GM12878 (cell line): ENCODE measurements at regions of chr5 and their contacts with region 1.

Region 1: GRCh38 chr5:14650052-14650451 is 14.5 kb upstream of the OTULIN start:
- DNase-seq: no peak
- ATAC-seq: no peak
- H3K4me3 ChIP-seq: no peak overlapping the region
- H3K27ac ChIP-seq: no peak overlapping the region
- H3K4me1 ChIP-seq: no peaks in the 10 kb centered on the region
- H3K27me3 ChIP-seq: no peaks in the 10 kb centered on the region
- CTCF ChIP-seq: no peak
- EP300 ChIP-seq: no peak
- POLR2A ChIP-seq: no peak
- RAD21 ChIP-seq: no peak

Region 2: GRCh38 chr5:13976867-13977830 is 672.9 kb before region 1 on chr5:
- CTCF ChIA-PET with region 1: interaction called, 10 read pairs
- POLR2A ChIA-PET with region 1: no interaction called
- RAD21 ChIA-PET with region 1: interaction called, 6 read pairs
- SMC1A ChIA-PET with region 1: interaction called, 5 read pairs
- in situ Hi-C with region 1: no loop called
- intact Hi-C with region 1: no loop called
- DNase-seq: no peak
- ATAC-seq: peak; percentile 67
- H3K4me3 ChIP-seq: no peak overlapping the region
- H3K27ac ChIP-seq: no peak overlapping the region
- H3K4me1 ChIP-seq: no peaks in the 10 kb centered on the region
- H3K27me3 ChIP-seq: no peaks in the 10 kb centered on the region
- CTCF ChIP-seq: peak; percentile 17 to 44 (median 23); a peak in 4 of 6 replicates
- EP300 ChIP-seq: no peak
- POLR2A ChIP-seq: no peak
- RAD21 ChIP-seq: peak; percentile 40; the same call in 1 of the 2 replicates

Region 3: GRCh38 chr5:13987843-13988464 is 662.1 kb before region 1 on chr5:
- CTCF ChIA-PET with region 1: interaction called, 32 read pairs
- POLR2A ChIA-PET with region 1: no interaction called
- RAD21 ChIA-PET with region 1: interaction called, 8 read pairs
- SMC1A ChIA-PET with region 1: interaction called, 6 read pairs
- in situ Hi-C with region 1: loop called (anchors 5 kb)
- intact Hi-C with region 1: loop called (anchors 2 kb)
- DNase-seq: no peak
- ATAC-seq: peak; percentile 84
- H3K4me3 ChIP-seq: no peak overlapping the region
- H3K27ac ChIP-seq: no peak overlapping the region
- H3K4me1 ChIP-seq: no peaks in the 10 kb centered on the region
- H3K27me3 ChIP-seq: peaks cover 0 to 2% of the 10 kb centered on the region in 2 experiments; a peak in 1 of 4 replicates
- CTCF ChIP-seq: peak; percentile 70 to 89 (median 83)
- EP300 ChIP-seq: no peak
- POLR2A ChIP-seq: no peak
- RAD21 ChIP-seq: peak; percentile 97

Region 4: DNA sequence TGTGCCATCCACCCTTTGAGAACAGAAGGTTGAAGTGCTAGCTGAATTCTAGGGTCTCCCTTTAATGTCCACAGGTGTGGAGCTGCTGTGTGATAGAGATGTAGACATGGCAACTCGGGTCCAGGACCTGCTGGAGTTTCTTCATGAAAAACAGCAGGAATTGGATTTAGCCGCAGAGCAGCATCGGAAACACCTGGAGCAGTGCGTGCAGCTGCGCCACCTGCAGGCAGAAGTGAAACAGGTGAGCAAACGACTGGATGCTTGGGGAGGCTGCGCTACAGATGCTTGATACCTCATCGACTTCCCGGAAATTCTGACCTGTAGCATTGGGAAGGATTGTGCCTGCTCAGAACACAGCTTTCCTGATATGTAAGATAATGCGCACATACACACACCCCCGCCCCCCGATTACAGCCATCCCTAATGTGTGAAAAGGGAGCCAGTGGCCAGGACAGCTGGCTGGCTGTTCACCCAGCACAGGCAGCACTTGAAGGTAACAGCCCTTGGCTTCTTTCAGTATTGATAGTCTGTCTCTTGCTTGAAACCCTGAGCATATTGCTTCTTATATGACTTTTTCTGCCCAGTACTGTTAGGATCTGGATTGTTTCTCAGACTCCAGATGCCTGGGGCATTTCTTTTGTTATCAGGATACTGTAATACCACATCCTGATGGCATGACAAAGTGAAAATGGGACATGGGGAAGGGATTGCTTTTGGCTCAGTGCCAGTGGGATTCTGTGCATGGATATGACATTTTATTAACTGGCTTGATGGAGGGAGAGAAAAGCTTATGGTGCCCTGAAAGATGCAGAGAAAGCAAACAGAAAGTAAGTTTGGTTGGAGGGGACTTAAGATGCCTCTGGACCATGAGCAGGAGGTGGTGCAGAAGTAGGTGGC is 285.2 kb before region 1 on chr5:
- CTCF ChIA-PET with region 1: interaction called, 15 read pairs
- POLR2A ChIA-PET with region 1: no interaction called
- RAD21 ChIA-PET with region 1: interaction called, 5 read pairs
- SMC1A ChIA-PET with region 1: interaction called, 4 read pairs
- in situ Hi-C with region 1: no loop called
- intact Hi-C with region 1: no loop called
- DNase-seq: no peak
- ATAC-seq: peak; percentile 49; the same call in 2 of the 3 replicates
- H3K4me3 ChIP-seq: no peak overlapping the region
- H3K27ac ChIP-seq: no peak overlapping the region
- H3K4me1 ChIP-seq: no peaks in the 10 kb centered on the region
- H3K27me3 ChIP-seq: no peaks in the 10 kb centered on the region
- CTCF ChIP-seq: peak; percentile 40 to 70 (median 46)
- EP300 ChIP-seq: no peak
- POLR2A ChIP-seq: no peak
- RAD21 ChIP-seq: peak; percentile 38

Region 5: GRCh38 chr5:14399054-14399692 is 250.9 kb before region 1 on chr5:
- CTCF ChIA-PET with region 1: interaction called, 59 read pairs
- POLR2A ChIA-PET with region 1: no interaction called
- RAD21 ChIA-PET with region 1: interaction called, 25 read pairs
- SMC1A ChIA-PET with region 1: interaction called, 29 read pairs
- in situ Hi-C with region 1: loop called (anchors 10 kb)
- intact Hi-C with region 1: loop called (anchors 1 kb)
- DNase-seq: no peak
- ATAC-seq: peak; percentile 71
- H3K4me3 ChIP-seq: no peak overlapping the region
- H3K27ac ChIP-seq: no peak overlapping the region
- H3K4me1 ChIP-seq: no peaks in the 10 kb centered on the region
- H3K27me3 ChIP-seq: no peaks in the 10 kb centered on the region
- CTCF ChIP-seq: peak; percentile 50 to 62 (median 56)
- EP300 ChIP-seq: no peak
- POLR2A ChIP-seq: no peak
- RAD21 ChIP-seq: peak; percentile 84

Region 6: GRCh38 chr5:14685757-14686156 is 35.7 kb after region 1 on chr5:
- CTCF ChIA-PET with region 1: interaction called, 14 read pairs
- POLR2A ChIA-PET with region 1: no interaction called
- RAD21 ChIA-PET with region 1: interaction called, 6 read pairs
- SMC1A ChIA-PET with region 1: interaction called, 7 read pairs
- in situ Hi-C with region 1: no loop called
- intact Hi-C with region 1: no loop called
- DNase-seq: peak; percentile 68
- ATAC-seq: peak; percentile 96
- H3K4me3 ChIP-seq: no peak overlapping the region
- H3K27ac ChIP-seq: no peak overlapping the region
- H3K4me1 ChIP-seq: no peaks in the 10 kb centered on the region
- H3K27me3 ChIP-seq: no peaks in the 10 kb centered on the region
- CTCF ChIP-seq: peak; percentile 64 to 74 (median 71); a peak in 5 of 6 replicates
- EP300 ChIP-seq: no peak
- POLR2A ChIP-seq: no peak
- RAD21 ChIP-seq: peak; percentile 72

Region 7: DNA sequence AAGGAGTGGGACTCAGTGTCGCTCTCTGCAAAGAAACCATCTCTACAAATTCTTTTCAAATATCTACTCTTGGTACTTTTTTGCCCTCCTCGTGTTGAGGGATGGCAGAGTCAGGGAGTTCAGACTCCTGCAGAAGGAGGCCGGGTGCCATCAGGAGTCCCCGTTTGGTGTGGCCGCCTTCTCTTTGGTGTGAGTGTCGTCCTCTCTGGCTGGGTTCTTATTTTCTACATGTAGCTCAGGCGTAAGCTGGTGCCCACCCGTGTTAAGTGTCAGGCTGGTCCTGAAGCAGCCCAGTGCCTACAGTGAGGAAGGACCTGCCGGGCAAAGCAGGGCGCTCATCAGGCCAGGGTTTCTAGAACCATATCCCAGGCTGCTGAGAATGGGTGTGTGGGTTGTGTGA is 51.5 kb after region 1 on chr5:
- CTCF ChIA-PET with region 1: no interaction called
- POLR2A ChIA-PET with region 1: no interaction called
- RAD21 ChIA-PET with region 1: no interaction called
- SMC1A ChIA-PET with region 1: no interaction called
- in situ Hi-C with region 1: no loop called
- intact Hi-C with region 1: no loop called
- DNase-seq: no peak
- ATAC-seq: no peak
- H3K4me3 ChIP-seq: no peak overlapping the region
- H3K27ac ChIP-seq: no peak overlapping the region
- H3K4me1 ChIP-seq: no peaks in the 10 kb centered on the region
- H3K27me3 ChIP-seq: no peaks in the 10 kb centered on the region
- CTCF ChIP-seq: no peak
- EP300 ChIP-seq: no peak
- POLR2A ChIP-seq: no peak
- RAD21 ChIP-seq: no peak

Region 8: DNA sequence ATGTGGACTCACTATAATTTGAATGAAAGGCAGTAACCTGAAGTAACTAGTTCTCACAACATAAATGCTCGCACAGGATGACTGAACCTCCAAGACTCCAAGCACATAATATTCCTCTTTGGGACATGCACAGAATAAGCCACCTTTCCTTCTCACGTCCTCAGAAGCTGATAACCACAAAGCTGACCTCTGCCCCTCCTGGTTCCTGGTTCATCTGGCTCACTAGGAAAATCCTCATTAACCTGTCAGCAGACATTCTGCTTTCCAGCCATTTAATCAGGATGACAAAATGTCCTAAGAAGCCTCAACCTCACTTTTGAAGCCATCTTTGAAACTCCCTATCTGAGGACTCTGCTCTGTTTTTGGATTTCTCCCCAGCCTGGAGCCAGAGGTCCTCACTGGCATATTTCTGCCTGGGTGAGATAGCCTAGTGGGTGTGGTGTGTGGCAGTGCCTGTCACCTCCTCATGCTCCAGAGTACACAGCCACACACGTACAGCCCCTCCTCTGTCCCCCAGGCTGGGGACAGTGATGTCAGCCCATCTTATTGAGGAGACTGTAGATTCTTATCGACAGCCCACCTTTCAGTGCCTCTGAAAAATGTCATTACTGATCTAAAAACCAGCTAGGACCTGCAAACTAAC is 211.2 kb after region 1 on chr5:
- CTCF ChIA-PET with region 1: no interaction called
- POLR2A ChIA-PET with region 1: no interaction called
- RAD21 ChIA-PET with region 1: no interaction called
- SMC1A ChIA-PET with region 1: no interaction called
- in situ Hi-C with region 1: no loop called
- intact Hi-C with region 1: no loop called
- DNase-seq: no peak
- ATAC-seq: peak; percentile 27; the same call in 2 of the 3 replicates
- H3K4me3 ChIP-seq: no peak overlapping the region
- H3K27ac ChIP-seq: no peak overlapping the region
- H3K4me1 ChIP-seq: no peaks in the 10 kb centered on the region
- H3K27me3 ChIP-seq: no peaks in the 10 kb centered on the region
- CTCF ChIP-seq: no peak
- EP300 ChIP-seq: no peak
- POLR2A ChIP-seq: no peak
- RAD21 ChIP-seq: no peak